ENCODE measurements at regions of chr15 and their contacts with region 1.

Region 1: DNA sequence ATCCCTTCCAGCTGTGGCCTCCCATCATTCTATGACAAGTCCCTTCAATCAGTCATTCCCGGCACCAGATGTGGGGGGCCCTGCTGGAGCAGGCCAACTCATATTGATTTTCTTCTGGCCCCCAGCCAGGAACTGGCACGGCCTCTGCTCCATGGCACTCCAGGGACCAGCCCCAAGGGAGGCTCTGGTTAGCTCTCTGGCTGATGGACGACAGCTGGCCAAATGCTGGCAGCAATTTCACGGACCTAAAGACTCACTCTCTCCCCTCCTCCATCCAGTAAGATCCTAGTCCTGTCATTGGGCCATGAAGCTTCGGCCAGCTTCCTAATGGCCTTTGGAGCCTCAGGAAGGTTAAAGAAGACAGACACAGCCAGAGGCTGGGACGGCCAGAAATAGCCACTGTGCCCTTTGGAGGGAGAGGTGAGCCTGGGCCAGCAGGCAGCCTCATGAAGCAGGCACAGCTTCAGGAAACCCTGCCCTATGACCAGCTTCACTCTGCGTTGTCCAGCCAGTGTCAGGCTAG is 131.0 kb downstream of the MEX3B start:
- DNase-seq: no peak
- H3K4me3 ChIP-seq: no peak overlapping the region
- H3K27ac ChIP-seq: no peak overlapping the region
- H3K4me1 ChIP-seq: no peaks in the 10 kb centered on the region
- H3K27me3 ChIP-seq: no peaks in the 10 kb centered on the region
- CTCF ChIP-seq: no peak

Region 2: DNA sequence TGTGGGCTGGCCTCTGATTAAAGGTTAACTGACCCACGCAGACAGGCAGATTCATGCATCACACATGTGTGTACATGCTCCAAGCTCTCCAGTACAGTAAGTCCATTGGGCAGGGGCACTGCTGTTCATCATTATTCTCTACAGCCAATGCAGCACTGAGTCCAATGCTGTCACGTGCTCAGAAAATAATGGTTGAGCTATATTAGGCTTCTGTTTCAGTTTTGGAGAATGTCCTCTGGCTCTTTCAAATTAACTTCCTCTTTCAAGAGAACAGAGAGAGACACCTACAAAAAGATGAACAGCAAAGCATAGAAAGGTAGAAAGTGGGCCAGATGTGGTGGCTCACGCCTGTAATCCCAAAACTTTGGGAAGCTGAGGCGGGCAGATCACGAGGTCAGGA is 71.6 kb before region 1 on chr15:
- CTCF ChIA-PET with region 1: no interaction called
- dilution Hi-C with region 1: loop called (anchors 5 kb)
- in situ Hi-C with region 1: no loop called
- intact Hi-C with region 1: no loop called
- DNase-seq: no peak
- H3K4me3 ChIP-seq: no peak overlapping the region
- H3K27ac ChIP-seq: no peak overlapping the region
- H3K4me1 ChIP-seq: no peaks in the 10 kb centered on the region
- H3K27me3 ChIP-seq: no peaks in the 10 kb centered on the region
- CTCF ChIP-seq: no peak

Region 3: DNA sequence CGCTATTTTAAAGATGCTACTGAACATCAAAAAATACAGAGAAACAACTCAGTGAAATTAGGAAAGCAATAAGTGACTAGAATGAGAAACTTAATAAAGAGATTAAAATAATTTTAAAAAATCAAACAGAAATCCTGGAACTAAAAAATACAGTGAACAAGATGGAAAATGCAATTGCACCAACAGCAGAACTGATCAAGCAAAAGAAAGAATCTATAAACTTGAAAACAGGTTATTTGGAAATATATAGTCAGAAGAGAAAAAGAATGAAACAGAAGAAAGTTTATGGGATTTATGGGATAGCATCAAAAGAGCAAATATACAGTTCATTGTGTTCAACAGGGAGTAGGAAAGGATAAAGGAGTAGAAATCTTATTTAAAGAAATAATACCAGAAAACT is 77.7 kb after region 1 on chr15:
- CTCF ChIA-PET with region 1: no interaction called
- dilution Hi-C with region 1: loop called (anchors 5 kb)
- in situ Hi-C with region 1: no loop called
- intact Hi-C with region 1: no loop called
- DNase-seq: no peak
- H3K4me3 ChIP-seq: no peak overlapping the region
- H3K27ac ChIP-seq: no peak overlapping the region
- H3K4me1 ChIP-seq: no peaks in the 10 kb centered on the region
- H3K27me3 ChIP-seq: no peaks in the 10 kb centered on the region
- CTCF ChIP-seq: no peak